ENCODE measurements at regions of chr11 and their contacts with region 1.

Region 1: GRCh38 chr11:86041975-86042378 is 26.9 kb downstream of the PICALM start:
- DNase-seq: peak; percentile 74
- H3K4me3 ChIP-seq: no peak overlapping the region
- CTCF ChIP-seq: peak; percentile 64

Region 2: DNA sequence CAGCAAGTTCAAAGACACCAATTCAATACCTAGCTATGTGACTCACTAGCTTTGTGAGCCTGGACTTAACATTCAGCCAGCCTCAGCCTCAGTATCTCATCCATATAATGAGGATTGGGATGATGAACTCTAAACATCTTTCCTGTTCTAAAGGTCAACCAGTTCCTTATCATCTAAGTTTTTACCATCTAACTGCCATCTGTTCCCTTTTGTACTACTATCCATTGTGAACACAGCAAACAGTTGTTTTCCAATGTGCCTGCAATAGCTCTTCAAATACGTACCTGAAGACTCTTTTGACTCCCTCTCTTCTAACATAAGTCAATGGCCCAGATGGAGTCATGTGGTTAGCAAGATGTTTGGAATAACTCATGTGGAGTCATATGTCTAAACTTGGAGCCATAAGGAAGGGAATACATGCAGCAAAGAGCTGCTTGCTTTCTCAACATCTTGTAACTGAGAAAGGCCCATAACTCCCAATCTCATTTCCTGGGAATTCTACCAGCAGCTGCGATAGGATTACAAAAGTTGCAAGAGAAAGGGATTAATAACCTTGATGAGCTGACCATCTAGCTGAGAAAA is 250.5 kb before region 1 on chr11:
- CTCF ChIA-PET with region 1: no interaction called
- POLR2A ChIA-PET with region 1: no interaction called
- DNase-seq: no peak
- H3K4me3 ChIP-seq: no peak overlapping the region
- CTCF ChIP-seq: no peak

Region 3: GRCh38 chr11:85875142-85875922 is 166.6 kb before region 1 on chr11:
- CTCF ChIA-PET with region 1: no interaction called
- POLR2A ChIA-PET with region 1: no interaction called
- DNase-seq: no peak
- H3K4me3 ChIP-seq: no peak overlapping the region
- CTCF ChIP-seq: no peak

Region 4: DNA sequence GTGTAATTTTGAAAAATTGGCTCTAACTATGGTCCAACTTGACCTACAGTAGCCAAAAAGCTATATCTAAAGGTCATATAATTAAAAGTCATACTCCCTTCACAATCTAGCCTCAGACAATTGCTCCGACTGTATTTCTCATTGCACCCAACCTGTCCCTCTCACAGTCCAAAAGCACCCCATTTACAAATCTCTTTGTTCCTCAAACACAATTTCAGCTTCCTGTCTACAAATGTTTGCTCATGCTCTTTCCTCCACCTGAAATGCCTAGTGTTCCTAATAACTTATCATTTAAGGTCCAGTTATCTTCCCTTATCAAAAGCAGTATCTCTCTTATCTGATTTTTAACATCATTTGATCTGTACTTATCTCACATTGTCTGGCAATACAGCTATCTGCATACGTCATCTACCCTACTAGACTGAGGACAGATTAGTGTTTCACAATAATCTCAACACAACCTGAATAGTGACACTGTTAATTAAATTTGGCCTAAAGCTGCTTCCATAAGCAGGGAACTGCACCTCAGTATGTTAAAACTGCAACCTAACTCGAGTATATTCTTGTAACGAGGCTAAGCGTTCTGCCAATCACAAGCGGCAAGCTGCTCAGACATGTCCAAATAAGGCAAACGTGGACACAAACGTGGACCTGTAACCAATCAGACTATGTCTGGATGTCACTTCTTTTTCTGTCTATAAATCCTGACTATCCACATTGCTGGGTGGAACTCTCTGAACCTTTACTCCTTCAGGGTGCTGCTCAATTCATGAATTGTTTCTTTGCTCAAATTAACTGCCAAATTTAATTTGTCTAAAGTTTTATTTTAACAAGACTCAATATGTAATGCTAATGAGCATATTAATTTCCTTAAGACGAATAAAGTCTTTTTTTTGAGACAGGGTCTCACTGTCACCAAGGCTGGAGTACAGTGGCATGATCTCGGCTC is 11.0 kb after region 1 on chr11:
- CTCF ChIA-PET with region 1: interaction called, 33 read pairs
- POLR2A ChIA-PET with region 1: no interaction called
- DNase-seq: no peak
- H3K4me3 ChIP-seq: no peak overlapping the region
- CTCF ChIP-seq: no peak

Region 5: GRCh38 chr11:86068951-86069407 is 27.0 kb after region 1 on chr11 and contains the start of gene PICALM:
- CTCF ChIA-PET with region 1: interaction called, 20 read pairs
- POLR2A ChIA-PET with region 1: interaction called, 3 read pairs
- DNase-seq: peak; percentile 93
- H3K4me3 ChIP-seq: peak within 1 kb of the TSS; percentile 94
- CTCF ChIP-seq: no peak

Region 6: DNA sequence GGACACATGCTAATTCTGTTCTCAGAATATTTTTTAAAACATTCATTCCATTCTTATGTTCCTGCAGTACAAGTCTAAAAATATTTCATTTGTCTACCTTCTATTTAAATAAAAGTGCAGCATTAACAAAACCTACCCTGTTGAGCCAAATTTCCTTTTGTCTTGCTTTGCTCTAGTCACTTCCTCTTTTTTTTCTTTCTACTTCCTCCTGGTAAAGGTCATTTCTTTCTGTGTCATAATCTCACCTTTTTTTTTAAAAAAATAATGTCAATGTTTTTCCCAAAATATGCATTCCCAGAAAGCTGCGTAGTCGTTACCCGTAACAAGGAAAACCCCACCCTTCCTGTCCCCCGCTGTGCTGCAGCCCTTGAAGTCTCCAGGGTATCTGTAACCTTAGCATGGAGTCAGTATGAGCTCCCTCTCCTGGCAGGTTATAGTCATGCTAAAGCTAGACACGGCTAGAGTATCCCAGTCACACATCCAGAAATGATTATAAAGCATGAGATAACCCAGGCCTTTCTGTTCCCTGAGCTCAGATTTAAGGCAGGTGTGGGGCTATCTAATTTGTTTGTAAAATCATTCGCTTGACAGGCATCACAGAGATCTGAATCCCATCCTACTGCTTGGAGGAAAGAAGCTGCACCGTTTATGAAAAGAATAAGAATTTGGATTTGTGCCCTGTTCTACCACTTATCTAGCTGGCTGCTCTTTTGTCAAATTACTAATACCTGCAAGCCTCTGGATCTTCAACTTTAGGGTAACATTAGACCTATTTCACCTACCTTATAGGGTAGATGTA is 151.5 kb after region 1 on chr11:
- CTCF ChIA-PET with region 1: interaction called, 73 read pairs
- POLR2A ChIA-PET with region 1: interaction called, 5 read pairs
- DNase-seq: no peak
- H3K4me3 ChIP-seq: no peak overlapping the region; the same call in 1 of the 2 replicates
- CTCF ChIP-seq: peak; percentile 72

Region 7: GRCh38 chr11:86218125-86219084 is 176.4 kb after region 1 on chr11:
- CTCF ChIA-PET with region 1: interaction called, 80 read pairs
- POLR2A ChIA-PET with region 1: no interaction called
- DNase-seq: no peak
- H3K4me3 ChIP-seq: peak overlapping the region; percentile 2; the same call in 1 of the 2 replicates
- CTCF ChIP-seq: peak; percentile 83

Measured in AG04449 (cell line).